Activated CD4-positive, alpha-beta T cell treated with anti-CD3 and anti-CD28 coated beads for 36 hours (primary cell): ENCODE measurements at regions of chr2 and their contacts with region 1.

Region 1: GRCh38 chr2:85707304-85707703 is 13.1 kb downstream of the GNLY start:
- DNase-seq: peak; percentile 72
- ATAC-seq: peak; percentile 95
- H3K4me3 Mint-ChIP-seq: no peak overlapping the region
- H3K27ac Mint-ChIP-seq: peak overlapping the region; percentile 44
- H3K4me1 Mint-ChIP-seq: peaks cover 21% of the 10 kb centered on the region
- H3K27me3 Mint-ChIP-seq: peaks cover 7% of the 10 kb centered on the region

Region 2: DNA sequence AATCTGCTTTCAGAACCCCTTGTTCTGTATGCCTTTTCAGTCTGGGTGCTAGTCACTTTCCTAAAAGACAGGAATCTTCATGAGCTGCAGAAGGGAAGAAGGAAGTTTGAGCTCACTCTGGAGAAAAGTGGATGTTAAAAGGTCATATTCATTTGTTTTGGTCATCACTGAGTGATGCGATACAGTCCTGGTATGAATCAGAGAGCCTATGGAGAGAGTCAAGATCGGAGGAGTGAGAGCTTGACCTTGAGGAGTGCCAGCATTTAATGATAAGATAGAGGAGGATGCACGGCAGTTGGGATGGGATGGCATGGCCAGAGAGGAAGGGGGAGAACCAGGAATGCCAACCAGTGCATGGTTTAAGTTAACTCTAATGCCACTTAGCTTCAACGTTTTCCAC is 71.7 kb before region 1 on chr2:
- CTCF ChIA-PET with region 1: interaction called, 53 read pairs
- POLR2A ChIA-PET with region 1: no interaction called
- intact Hi-C with region 1: loop called (anchors 1 kb)
- DNase-seq: no peak
- ATAC-seq: no peak
- H3K4me3 Mint-ChIP-seq: no peak overlapping the region
- H3K27ac Mint-ChIP-seq: no peak overlapping the region
- H3K4me1 Mint-ChIP-seq: peaks cover 10% of the 10 kb centered on the region
- H3K27me3 Mint-ChIP-seq: no peaks in the 10 kb centered on the region

Region 3: GRCh38 chr2:85642725-85643124 is 64.6 kb before region 1 on chr2:
- CTCF ChIA-PET with region 1: interaction called, 53 read pairs
- POLR2A ChIA-PET with region 1: no interaction called
- intact Hi-C with region 1: loop called (anchors 1 kb)
- DNase-seq: peak; percentile 30
- ATAC-seq: peak; percentile 82
- H3K4me3 Mint-ChIP-seq: no peak overlapping the region
- H3K27ac Mint-ChIP-seq: peak overlapping the region; percentile 27
- H3K4me1 Mint-ChIP-seq: peaks cover 14% of the 10 kb centered on the region
- H3K27me3 Mint-ChIP-seq: no peaks in the 10 kb centered on the region

Region 4: GRCh38 chr2:85678794-85679672 is 28.3 kb before region 1 on chr2:
- CTCF ChIA-PET with region 1: interaction called, 51 read pairs
- POLR2A ChIA-PET with region 1: no interaction called
- intact Hi-C with region 1: loop called (anchors 1 kb)
- DNase-seq: peak; percentile 85
- ATAC-seq: peak; percentile 96
- H3K4me3 Mint-ChIP-seq: no peak overlapping the region
- H3K27ac Mint-ChIP-seq: no peak overlapping the region
- H3K4me1 Mint-ChIP-seq: no peaks in the 10 kb centered on the region
- H3K27me3 Mint-ChIP-seq: peaks cover 2% of the 10 kb centered on the region

Region 5: DNA sequence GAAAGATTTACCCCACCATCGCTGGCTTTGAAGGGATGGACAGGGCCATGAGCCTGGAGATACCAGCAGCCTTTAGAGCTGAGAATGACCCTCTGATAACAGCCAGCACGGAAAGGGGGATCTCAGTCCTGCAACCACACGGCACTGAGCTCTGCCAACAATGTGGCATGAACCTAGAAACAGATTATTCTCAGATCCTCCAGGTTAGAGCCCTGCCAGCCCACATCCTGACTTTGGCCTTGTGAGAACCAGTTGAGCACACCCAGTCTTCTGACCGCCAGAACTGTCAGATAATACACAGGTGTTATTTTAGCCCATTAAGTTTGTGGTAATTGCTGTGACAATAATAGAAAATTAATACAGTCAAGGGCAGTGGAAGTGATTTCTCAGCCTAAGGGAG is 22.5 kb before region 1 on chr2:
- CTCF ChIA-PET with region 1: interaction called, 51 read pairs
- POLR2A ChIA-PET with region 1: no interaction called
- intact Hi-C with region 1: no loop called
- DNase-seq: no peak
- ATAC-seq: no peak
- H3K4me3 Mint-ChIP-seq: no peak overlapping the region
- H3K27ac Mint-ChIP-seq: no peak overlapping the region
- H3K4me1 Mint-ChIP-seq: no peaks in the 10 kb centered on the region
- H3K27me3 Mint-ChIP-seq: peaks cover 2% of the 10 kb centered on the region

Region 6: GRCh38 chr2:85694052-85695025 is 13.0 kb before region 1 on chr2 and contains the start of gene GNLY:
- CTCF ChIA-PET with region 1: interaction called, 15 read pairs
- POLR2A ChIA-PET with region 1: no interaction called
- intact Hi-C with region 1: no loop called
- DNase-seq: no peak
- ATAC-seq: no peak
- H3K4me3 Mint-ChIP-seq: no peak within 1 kb of the TSS
- H3K27ac Mint-ChIP-seq: no peak within 1 kb of the TSS
- H3K4me1 Mint-ChIP-seq: no peaks in the 10 kb centered on the region
- H3K27me3 Mint-ChIP-seq: no peaks in the 10 kb centered on the region
- total RNA-seq, gene GNLY: 18.9 to 21.6 TPM

Region 7: DNA sequence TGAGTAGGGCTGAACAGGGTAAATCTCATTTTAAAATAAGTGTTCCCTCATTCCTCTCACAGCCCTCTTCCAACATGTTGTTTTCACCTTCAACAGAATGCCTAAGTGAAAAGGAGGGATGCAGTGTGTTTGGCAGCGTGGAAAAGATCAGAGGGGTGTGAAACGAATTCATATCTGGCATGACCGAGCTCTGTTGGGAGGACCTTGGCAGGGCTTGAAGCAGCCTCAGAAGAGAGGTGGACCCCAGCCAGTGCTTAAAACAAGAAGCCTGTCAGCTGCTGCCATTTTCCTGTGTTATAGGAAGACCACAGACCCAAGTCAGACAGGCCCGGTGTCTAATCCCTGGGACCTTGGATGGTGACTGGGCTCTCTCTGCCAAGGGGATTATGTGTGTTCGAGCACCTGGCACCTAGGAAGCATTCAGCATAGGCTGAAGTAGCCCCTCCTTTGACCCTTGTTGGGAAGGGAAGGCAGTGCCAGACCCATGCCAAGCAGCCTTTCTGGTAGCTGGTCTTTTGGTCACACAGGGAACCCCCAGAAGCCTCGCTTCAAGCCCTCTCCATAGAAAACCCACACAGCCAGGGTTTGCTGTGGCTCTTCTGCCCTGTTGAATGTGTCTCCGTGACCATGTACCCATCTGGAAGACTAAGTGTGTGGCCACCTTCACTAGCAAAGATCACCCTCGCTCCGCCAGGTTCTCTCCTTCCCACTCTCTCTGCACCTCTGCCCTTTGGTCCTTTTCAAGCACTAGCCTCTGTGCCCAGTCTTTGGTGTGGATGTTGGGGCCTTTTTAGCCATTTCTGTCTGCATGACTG is 269.0 kb after region 1 on chr2:
- CTCF ChIA-PET with region 1: no interaction called
- POLR2A ChIA-PET with region 1: no interaction called
- intact Hi-C with region 1: no loop called
- DNase-seq: no peak
- ATAC-seq: no peak
- H3K4me3 Mint-ChIP-seq: no peak overlapping the region
- H3K27ac Mint-ChIP-seq: no peak overlapping the region
- H3K4me1 Mint-ChIP-seq: no peaks in the 10 kb centered on the region
- H3K27me3 Mint-ChIP-seq: no peaks in the 10 kb centered on the region